ENCODE measurements at regions of chr3 and their contacts with region 1.

Region 1: DNA sequence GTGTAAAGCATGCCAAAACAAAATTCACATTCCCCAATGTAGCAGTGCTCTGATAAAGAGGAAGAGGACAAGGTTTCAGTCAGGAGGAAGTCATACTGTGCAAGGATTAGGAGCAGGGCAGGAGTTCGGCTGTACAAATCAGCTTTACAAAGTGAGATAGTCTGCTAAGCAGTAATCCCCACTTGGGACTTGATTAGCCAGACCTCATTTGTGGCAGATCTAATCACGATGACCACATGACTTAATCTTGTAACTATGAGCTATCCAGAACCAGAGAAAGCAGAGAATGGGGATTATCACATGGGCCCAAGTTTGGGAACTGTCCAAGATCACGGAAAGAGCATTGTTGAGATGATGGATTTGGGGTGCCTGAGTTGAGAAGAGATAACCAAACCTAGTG is 7.8 kb downstream of the DCBLD2 start:
- DNase-seq: no peak

Region 2: DNA sequence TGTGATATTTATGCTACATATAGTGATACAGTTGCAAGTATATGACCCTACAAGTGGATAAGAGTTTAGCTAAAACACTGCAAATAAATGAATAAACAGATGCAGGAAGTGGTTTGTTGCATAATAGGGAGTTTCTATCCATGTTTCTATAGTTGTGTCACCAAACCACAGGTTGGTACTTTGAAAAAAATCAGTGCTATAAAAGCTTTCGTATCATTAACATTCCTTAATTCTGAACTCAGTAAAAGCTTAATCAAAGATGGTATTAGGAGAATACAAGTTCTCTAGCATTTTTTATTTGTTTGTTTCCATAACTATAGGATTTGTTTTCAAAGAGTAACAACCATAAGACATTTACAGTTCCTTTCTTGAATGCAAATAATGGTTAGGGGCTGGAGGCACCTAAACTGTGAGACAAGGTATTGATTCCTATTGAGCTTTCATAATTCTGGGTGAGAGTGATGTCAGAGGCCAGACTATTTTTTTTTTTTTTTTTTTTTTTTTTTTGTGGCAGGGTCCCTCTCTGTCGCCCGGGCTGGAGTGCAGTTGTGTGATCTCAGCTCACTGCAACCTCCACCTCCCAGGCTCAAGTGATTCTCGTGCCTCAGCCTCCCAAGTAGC is 330.0 kb before region 1 on chr3:
- in situ Hi-C with region 1: no loop called
- DNase-seq: peak; percentile 28

Region 3: GRCh38 chr3:98994128-98994762 is 100.5 kb after region 1 on chr3:
- in situ Hi-C with region 1: loop called (anchors 25 kb)
- DNase-seq: peak; percentile 63

Region 4: GRCh38 chr3:99087277-99087676 is 193.5 kb after region 1 on chr3:
- in situ Hi-C with region 1: no loop called
- DNase-seq: no peak